ENCODE measurements at regions of chr4 and their contacts with region 1.

Region 1: DNA sequence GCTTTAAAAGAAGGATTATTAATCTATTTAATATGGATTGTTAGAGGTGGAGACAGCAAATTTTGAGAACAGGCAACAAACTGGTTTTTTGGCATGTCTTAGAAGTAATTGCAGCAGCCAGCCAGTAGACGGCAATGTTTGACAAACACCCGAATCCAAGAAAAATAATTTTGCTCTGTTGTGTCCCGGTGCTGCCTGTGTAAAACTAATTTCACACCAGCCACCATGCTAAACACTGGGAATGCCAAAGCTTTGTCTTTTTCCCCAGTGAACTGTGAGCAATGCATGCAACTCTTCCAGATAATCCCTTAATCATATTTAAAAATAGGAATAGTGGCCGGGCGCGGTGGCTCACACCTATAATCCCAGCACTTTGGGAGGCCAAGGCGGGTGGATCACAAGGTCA is 25.9 kb downstream of the SMIM31 start:
- DNase-seq: no peak
- ATAC-seq: no peak
- H3K4me3 ChIP-seq: no peak overlapping the region
- H3K27ac ChIP-seq: no peak overlapping the region
- H3K4me1 ChIP-seq: no peaks in the 10 kb centered on the region
- H3K27me3 ChIP-seq: no peaks in the 10 kb centered on the region
- CTCF ChIP-seq: peak; percentile 88

Region 2: GRCh38 chr4:164997324-164997723 is 217.5 kb after region 1 on chr4:
- CTCF ChIA-PET with region 1: no interaction called
- POLR2A ChIA-PET with region 1: no interaction called
- in situ Hi-C with region 1: no loop called
- intact Hi-C with region 1: loop called (anchors 5 kb)
- DNase-seq: no peak
- ATAC-seq: no peak
- H3K4me3 ChIP-seq: no peak overlapping the region
- H3K27ac ChIP-seq: no peak overlapping the region
- H3K4me1 ChIP-seq: no peaks in the 10 kb centered on the region
- H3K27me3 ChIP-seq: no peaks in the 10 kb centered on the region; the same call in 1 of the 2 replicates
- CTCF ChIP-seq: peak; percentile 45

Region 3: DNA sequence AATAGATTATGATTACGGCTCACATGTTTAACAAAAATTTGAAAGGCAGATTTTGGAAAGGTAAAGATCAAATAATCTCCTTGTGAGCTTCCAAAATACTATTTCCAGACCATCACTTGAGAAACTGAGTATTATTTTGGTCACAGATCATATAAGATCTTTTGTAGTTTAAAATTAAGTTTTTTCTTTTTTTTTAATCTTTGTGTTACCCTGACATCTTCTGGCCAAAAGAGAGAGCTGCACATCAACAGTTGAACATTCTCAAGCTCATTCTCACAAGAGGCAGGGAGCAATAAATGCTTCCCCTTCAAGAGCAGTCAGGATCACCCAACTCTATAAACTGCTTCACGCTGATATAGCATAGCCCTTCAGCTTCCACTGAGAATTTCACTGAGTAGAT is 317.0 kb after region 1 on chr4:
- CTCF ChIA-PET with region 1: interaction called, 9 read pairs
- POLR2A ChIA-PET with region 1: no interaction called
- in situ Hi-C with region 1: no loop called
- intact Hi-C with region 1: loop called (anchors 2 kb)
- DNase-seq: no peak
- ATAC-seq: no peak
- H3K4me3 ChIP-seq: no peak overlapping the region
- H3K27ac ChIP-seq: no peak overlapping the region
- H3K4me1 ChIP-seq: no peaks in the 10 kb centered on the region
- H3K27me3 ChIP-seq: no peaks in the 10 kb centered on the region
- CTCF ChIP-seq: peak; percentile 64

Region 4: GRCh38 chr4:165814256-165815010 is 1034.6 kb after region 1 on chr4:
- CTCF ChIA-PET with region 1: no interaction called
- POLR2A ChIA-PET with region 1: no interaction called
- in situ Hi-C with region 1: no loop called
- intact Hi-C with region 1: no loop called
- DNase-seq: no peak
- ATAC-seq: no peak
- H3K4me3 ChIP-seq: no peak overlapping the region
- H3K27ac ChIP-seq: no peak overlapping the region
- H3K4me1 ChIP-seq: no peaks in the 10 kb centered on the region
- H3K27me3 ChIP-seq: no peaks in the 10 kb centered on the region
- CTCF ChIP-seq: no peak